Esophagus muscularis mucosa (tissue), 4 donors: ENCODE measurements at regions of chr10 and their contacts with region 1.

Region 1: GRCh38 chr10:113385021-113385999 is 167.5 kb upstream of the HABP2 start:
- DNase-seq: peak; percentile 93
- H3K4me3 ChIP-seq: peak overlapping the region in 1 of 4 donors; percentile 16
- H3K27ac ChIP-seq: peak overlapping the region; percentile 46 to 58 (median 47)
- H3K4me1 ChIP-seq: peaks cover 12 to 40% (median 30%) of the 10 kb centered on the region in 4 donors
- H3K27me3 ChIP-seq: no peaks in the 10 kb centered on the region
- CTCF ChIP-seq: peak; percentile 76 to 83 (median 78)
- EP300 ChIP-seq: no peak
- POLR2A ChIP-seq: no peak

Region 2: GRCh38 chr10:112565434-112566053 is 819.8 kb before region 1 on chr10:
- intact Hi-C with region 1: loop called (anchors 10 kb)
- DNase-seq: no peak
- H3K4me3 ChIP-seq: no peak overlapping the region
- H3K27ac ChIP-seq: no peak overlapping the region
- H3K4me1 ChIP-seq: no peaks in the 10 kb centered on the region
- H3K27me3 ChIP-seq: no peaks in the 10 kb centered on the region
- CTCF ChIP-seq: peak in 2 of 3 experiments; percentile 48 to 53
- EP300 ChIP-seq: no peak
- POLR2A ChIP-seq: no peak

Region 3: GRCh38 chr10:112711366-112711765 is 673.9 kb before region 1 on chr10:
- intact Hi-C with region 1: loop called (anchors 5 kb)
- DNase-seq: peak; percentile 75
- H3K4me3 ChIP-seq: no peak overlapping the region
- H3K27ac ChIP-seq: no peak overlapping the region
- H3K4me1 ChIP-seq: peaks cover 0 to 4% (median 1%) of the 10 kb centered on the region in 4 donors
- H3K27me3 ChIP-seq: no peaks in the 10 kb centered on the region
- CTCF ChIP-seq: no peak
- EP300 ChIP-seq: no peak
- POLR2A ChIP-seq: no peak

Region 4: GRCh38 chr10:113139699-113140098 is 245.6 kb before region 1 on chr10:
- intact Hi-C with region 1: loop called (anchors 5 kb)
- DNase-seq: no peak
- H3K4me3 ChIP-seq: no peak overlapping the region
- H3K27ac ChIP-seq: no peak overlapping the region
- H3K4me1 ChIP-seq: peaks cover 0 to 17% (median 13%) of the 10 kb centered on the region in 4 donors
- H3K27me3 ChIP-seq: no peaks in the 10 kb centered on the region
- CTCF ChIP-seq: peak in 1 of 3 experiments; percentile 10
- EP300 ChIP-seq: no peak
- POLR2A ChIP-seq: no peak

Region 5: DNA sequence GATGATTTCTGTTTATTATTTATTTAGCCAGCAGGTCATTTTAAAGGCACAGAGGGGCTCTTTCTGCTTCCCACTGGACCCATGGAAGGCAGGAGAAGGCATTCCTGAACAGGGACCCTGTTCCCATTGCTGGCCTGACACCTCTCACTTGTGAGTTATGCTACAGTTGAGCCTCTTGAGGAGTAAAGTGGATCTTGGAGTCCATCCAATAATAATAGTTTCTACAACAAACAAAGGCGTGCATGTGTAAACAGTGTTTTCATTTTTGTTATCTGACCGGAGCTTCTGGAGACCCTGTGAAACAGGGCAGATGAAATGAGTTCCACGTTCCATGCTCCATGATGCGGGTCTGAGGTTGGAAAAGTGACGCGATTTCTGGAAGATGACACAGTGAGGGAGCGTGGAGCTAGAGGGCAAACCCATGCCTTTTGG is 40.2 kb after region 1 on chr10:
- intact Hi-C with region 1: no loop called
- DNase-seq: no peak
- H3K4me3 ChIP-seq: no peak overlapping the region
- H3K27ac ChIP-seq: no peak overlapping the region
- H3K4me1 ChIP-seq: peaks cover 0 to 8% (median 0%) of the 10 kb centered on the region in 4 donors
- H3K27me3 ChIP-seq: peaks cover 0 to 5% (median 0%) of the 10 kb centered on the region in 4 donors
- CTCF ChIP-seq: no peak
- EP300 ChIP-seq: no peak
- POLR2A ChIP-seq: no peak

Region 6: DNA sequence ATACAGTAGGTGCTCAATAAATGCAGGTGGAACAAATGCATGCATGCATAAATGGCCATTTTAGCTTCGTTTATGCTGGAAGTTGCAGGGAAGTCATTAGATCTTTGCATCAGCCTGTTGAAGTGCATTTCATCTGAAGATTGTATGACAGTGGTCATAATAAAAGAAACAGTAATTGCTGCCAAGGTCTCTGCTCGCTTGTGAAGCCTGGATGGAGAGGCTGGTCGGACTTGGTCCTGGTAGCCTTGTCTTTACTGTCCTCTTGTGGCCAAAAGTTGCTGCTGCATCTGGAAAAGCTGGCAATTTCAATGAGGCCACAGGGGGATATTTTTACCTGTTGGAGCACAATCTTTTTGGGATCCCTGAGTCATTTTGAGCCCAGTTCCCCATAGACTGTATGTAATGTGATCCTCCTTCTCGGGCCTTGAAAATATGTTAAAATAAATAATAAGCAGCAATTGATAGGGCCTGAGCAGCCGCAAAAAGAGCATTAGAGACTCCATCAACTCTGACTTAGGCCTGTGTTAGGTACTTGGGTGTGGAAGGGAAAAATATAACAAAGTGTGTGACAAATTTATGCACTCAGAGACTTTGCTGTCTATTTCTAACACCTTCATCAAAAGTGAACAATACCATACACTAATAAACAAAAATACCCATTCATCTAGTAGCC is 135.9 kb after region 1 on chr10:
- intact Hi-C with region 1: loop called (anchors 2 kb)
- DNase-seq: no peak
- H3K4me3 ChIP-seq: no peak overlapping the region
- H3K27ac ChIP-seq: no peak overlapping the region
- H3K4me1 ChIP-seq: peaks cover 4 to 11% (median 11%) of the 10 kb centered on the region in 4 donors
- H3K27me3 ChIP-seq: no peaks in the 10 kb centered on the region
- CTCF ChIP-seq: peak; percentile 96 to 98 (median 97)
- EP300 ChIP-seq: no peak
- POLR2A ChIP-seq: no peak